Sigmoid colon (tissue), 7 donors: ENCODE measurements at regions of chr2 and their contacts with region 1.

Region 1: GRCh38 chr2:235675678-235676535 is 182.1 kb downstream of the AGAP1 start:
- DNase-seq: no peak
- H3K4me3 ChIP-seq: no peak overlapping the region
- H3K27ac ChIP-seq: peak overlapping the region in 1 of 4 donors; percentile 6
- H3K4me1 ChIP-seq: peaks cover 0 to 72% (median 45%) of the 10 kb centered on the region in 4 donors
- H3K27me3 ChIP-seq: no peaks in the 10 kb centered on the region
- CTCF ChIP-seq: peak in 1 of 4 experiments; percentile 11
- EP300 ChIP-seq: no peak
- POLR2A ChIP-seq: no peak

Region 2: GRCh38 chr2:235521844-235522243 is 154.1 kb before region 1 on chr2:
- intact Hi-C with region 1: no loop called
- DNase-seq: no peak
- H3K4me3 ChIP-seq: no peak overlapping the region
- H3K27ac ChIP-seq: no peak overlapping the region
- H3K4me1 ChIP-seq: peaks cover 0 to 4% (median 0%) of the 10 kb centered on the region in 4 donors
- H3K27me3 ChIP-seq: no peaks in the 10 kb centered on the region
- CTCF ChIP-seq: no peak
- EP300 ChIP-seq: no peak
- POLR2A ChIP-seq: no peak

Region 3: GRCh38 chr2:235630718-235631296 is 45.1 kb before region 1 on chr2:
- intact Hi-C with region 1: no loop called
- DNase-seq: no peak
- H3K4me3 ChIP-seq: peak overlapping the region in 2 of 4 donors; percentile 9 to 13
- H3K27ac ChIP-seq: peak overlapping the region in 2 of 4 donors; percentile 60 to 66
- H3K4me1 ChIP-seq: peaks cover 0 to 21% (median 17%) of the 10 kb centered on the region in 4 donors
- H3K27me3 ChIP-seq: no peaks in the 10 kb centered on the region
- CTCF ChIP-seq: no peak
- EP300 ChIP-seq: no peak
- POLR2A ChIP-seq: no peak

Region 4: GRCh38 chr2:235725016-235725489 is 49.1 kb after region 1 on chr2:
- intact Hi-C with region 1: loop called (anchors 5 kb)
- DNase-seq: peak; percentile 95
- H3K4me3 ChIP-seq: peak overlapping the region in 2 of 4 donors; percentile 5 to 19
- H3K27ac ChIP-seq: peak overlapping the region; percentile 74 to 86 (median 77)
- H3K4me1 ChIP-seq: peaks cover 0 to 62% (median 36%) of the 10 kb centered on the region in 4 donors
- H3K27me3 ChIP-seq: no peaks in the 10 kb centered on the region
- CTCF ChIP-seq: no peak
- EP300 ChIP-seq: peak in 2 of 4 donors; percentile 24 to 64
- POLR2A ChIP-seq: no peak